H1 (cell line): ENCODE measurements at regions of chr2 and their contacts with region 1.

Region 1: DNA sequence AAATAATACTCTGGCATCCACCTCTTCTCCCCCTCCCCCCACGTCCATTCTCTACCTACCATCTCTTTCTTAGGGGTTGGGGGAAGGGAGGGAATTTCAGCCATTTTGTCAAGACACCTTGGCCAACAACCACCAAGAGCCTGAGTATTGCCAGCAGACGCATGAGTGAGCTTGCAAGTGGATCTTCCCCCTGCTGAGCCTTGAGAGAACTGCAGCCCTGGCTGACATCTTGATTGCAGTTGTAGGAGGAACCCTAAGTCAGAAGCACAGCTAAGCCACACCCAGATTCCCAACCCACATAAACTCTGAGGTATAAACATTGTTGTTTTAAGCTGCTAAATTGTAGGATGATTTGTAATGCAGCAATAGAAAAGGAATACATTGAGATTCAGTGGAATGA is 165.6 kb downstream of the TMEFF2 start:
- DNase-seq: peak; percentile 43 to 58
- H3K4me3 ChIP-seq: no peak overlapping the region
- H3K27ac ChIP-seq: no peak overlapping the region
- H3K4me1 ChIP-seq: peaks cover 0 to 11% (median 5%) of the 10 kb centered on the region in 4 experiments; a peak in 5 of 7 replicates
- H3K27me3 ChIP-seq: peaks cover 0 to 1% (median 0%) of the 10 kb centered on the region in 4 experiments; a peak in 1 of 7 replicates
- CTCF ChIP-seq: peak; percentile 41 to 68 (median 53); a peak in 3 of 4 replicates
- EP300 ChIP-seq: no peak
- POLR2A ChIP-seq: no peak
- RAD21 ChIP-seq: peak; percentile 47 to 58

Region 2: DNA sequence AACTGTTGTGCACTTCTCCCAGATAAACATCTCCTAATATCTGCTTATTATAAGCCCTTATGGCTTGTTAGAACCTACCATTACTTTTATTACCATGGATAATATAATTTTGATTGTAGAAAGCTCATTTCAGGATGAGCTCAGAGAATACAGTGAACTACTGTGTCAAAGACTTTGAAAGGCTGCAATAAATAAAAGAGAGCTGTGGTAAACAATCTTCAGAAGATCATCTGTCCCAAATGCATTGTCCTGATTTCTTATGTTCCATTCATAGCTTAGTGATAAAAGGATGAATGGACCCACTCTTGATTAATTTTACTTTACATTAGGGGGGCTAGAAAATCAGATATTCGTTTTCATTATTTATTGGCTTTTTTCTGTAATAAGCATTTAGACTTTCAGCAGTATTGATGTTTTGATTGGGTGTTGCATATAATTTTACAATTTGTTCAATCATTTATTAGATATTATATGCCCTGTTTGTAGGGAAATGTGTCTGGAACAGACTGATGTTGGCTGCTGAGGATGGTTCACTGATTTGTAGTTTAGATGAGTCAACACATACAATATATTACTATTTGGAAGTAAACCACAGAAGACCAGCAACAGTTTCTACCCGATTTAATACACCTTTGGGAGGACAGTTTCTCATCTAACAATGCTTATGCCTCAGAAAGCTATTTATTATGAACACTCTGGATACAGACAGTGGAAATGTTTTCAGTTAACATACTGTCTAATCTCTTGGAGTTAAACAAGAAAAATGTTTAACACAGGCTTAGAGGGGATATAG is 18.4 kb after region 1 on chr2:
- CTCF ChIA-PET with region 1: interaction called, 10 read pairs
- POLR2A ChIA-PET with region 1: no interaction called
- DNase-seq: no peak
- H3K4me3 ChIP-seq: no peak overlapping the region
- H3K27ac ChIP-seq: no peak overlapping the region
- H3K4me1 ChIP-seq: no peaks in the 10 kb centered on the region
- H3K27me3 ChIP-seq: no peaks in the 10 kb centered on the region
- CTCF ChIP-seq: no peak
- EP300 ChIP-seq: no peak
- POLR2A ChIP-seq: no peak
- RAD21 ChIP-seq: no peak